CD4-positive, alpha-beta memory T cell (primary cell): ENCODE measurements at regions of chr17 and their contacts with region 1.

Region 1: DNA sequence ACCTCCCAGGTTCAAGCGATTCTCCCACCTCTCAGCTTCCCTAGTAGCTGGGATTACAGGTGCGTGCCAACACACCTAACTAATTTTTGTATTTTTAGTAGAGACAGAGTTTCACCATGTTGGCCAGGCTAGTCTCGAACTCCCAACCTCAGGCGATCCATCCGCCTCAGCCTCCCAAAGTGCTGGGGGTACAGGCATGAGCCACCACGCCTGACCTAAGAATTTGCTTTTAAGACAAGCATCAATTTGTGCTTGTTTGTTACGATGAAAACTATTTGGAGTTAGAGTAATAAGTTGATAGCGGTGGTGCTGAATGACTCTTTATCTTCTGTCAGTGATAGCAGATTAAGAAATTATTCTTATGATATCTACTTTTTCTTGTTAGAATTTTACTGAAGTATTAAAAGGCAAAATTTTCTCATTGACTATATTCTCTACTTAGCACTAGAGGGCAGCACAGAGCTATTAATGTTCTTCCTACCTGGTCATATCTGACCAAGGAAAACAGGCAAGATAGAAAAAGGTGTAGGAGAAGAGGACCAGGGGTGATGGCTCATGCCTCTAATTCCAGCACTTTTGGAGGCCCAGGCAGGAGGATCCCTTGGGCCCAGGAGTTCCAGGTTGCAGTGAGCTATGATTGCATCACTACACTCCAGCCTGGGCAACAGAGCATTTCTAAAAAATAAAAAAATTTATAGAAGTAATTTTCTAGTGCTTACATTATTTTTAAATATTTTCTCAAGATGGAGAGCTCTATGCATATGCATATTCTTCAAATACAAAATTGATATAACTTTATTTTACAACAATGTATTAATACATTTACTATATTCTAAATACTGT is 24.5 kb downstream of the STXBP4 start:
- DNase-seq: peak in 4 of 5 donors; percentile 49 to 59 (median 56)
- H3K4me3 ChIP-seq: no peak overlapping the region
- H3K4me3 Mint-ChIP-seq: no peak overlapping the region
- H3K27ac ChIP-seq: no peak overlapping the region
- H3K27ac Mint-ChIP-seq: no peak overlapping the region
- H3K4me1 ChIP-seq: no peaks in the 10 kb centered on the region
- H3K4me1 Mint-ChIP-seq: no peaks in the 10 kb centered on the region
- H3K27me3 ChIP-seq: no peaks in the 10 kb centered on the region
- H3K27me3 Mint-ChIP-seq: no peaks in the 10 kb centered on the region

Region 2: GRCh38 chr17:54900457-54901229 is 92.4 kb before region 1 on chr17 and contains the start of gene TOM1L1:
- CTCF ChIA-PET with region 1: no interaction called
- POLR2A ChIA-PET with region 1: no interaction called
- intact Hi-C with region 1: no loop called
- DNase-seq: peak in 4 of 5 donors; percentile 9 to 24 (median 15)
- H3K4me3 ChIP-seq: peak within 1 kb of the TSS in 1 of 2 donors; percentile 2
- H3K4me3 Mint-ChIP-seq: peak within 1 kb of the TSS; percentile 49 to 71 (median 56)
- H3K27ac ChIP-seq: no peak within 1 kb of the TSS
- H3K27ac Mint-ChIP-seq: peak within 1 kb of the TSS in 1 of 7 donors; percentile 36
- H3K4me1 ChIP-seq: peaks cover 7% of the 10 kb centered on the region
- H3K4me1 Mint-ChIP-seq: peaks cover 9 to 17% (median 12%) of the 10 kb centered on the region in 4 donors
- H3K27me3 ChIP-seq: no peaks in the 10 kb centered on the region
- H3K27me3 Mint-ChIP-seq: peaks cover 22 to 25% of the 10 kb centered on the region in 2 donors
- total RNA-seq, gene TOM1L1: 0.53 TPM in 1 of 2 experiments, not detected in the other

Region 3: GRCh38 chr17:55005520-55005919 is 12.5 kb after region 1 on chr17:
- CTCF ChIA-PET with region 1: interaction called, 35 read pairs
- POLR2A ChIA-PET with region 1: no interaction called
- intact Hi-C with region 1: no loop called
- DNase-seq: peak in 2 of 5 donors; percentile 1 to 5
- H3K4me3 ChIP-seq: no peak overlapping the region
- H3K4me3 Mint-ChIP-seq: no peak overlapping the region
- H3K27ac ChIP-seq: no peak overlapping the region
- H3K27ac Mint-ChIP-seq: no peak overlapping the region
- H3K4me1 ChIP-seq: no peaks in the 10 kb centered on the region
- H3K4me1 Mint-ChIP-seq: no peaks in the 10 kb centered on the region
- H3K27me3 ChIP-seq: no peaks in the 10 kb centered on the region
- H3K27me3 Mint-ChIP-seq: no peaks in the 10 kb centered on the region

Region 4: DNA sequence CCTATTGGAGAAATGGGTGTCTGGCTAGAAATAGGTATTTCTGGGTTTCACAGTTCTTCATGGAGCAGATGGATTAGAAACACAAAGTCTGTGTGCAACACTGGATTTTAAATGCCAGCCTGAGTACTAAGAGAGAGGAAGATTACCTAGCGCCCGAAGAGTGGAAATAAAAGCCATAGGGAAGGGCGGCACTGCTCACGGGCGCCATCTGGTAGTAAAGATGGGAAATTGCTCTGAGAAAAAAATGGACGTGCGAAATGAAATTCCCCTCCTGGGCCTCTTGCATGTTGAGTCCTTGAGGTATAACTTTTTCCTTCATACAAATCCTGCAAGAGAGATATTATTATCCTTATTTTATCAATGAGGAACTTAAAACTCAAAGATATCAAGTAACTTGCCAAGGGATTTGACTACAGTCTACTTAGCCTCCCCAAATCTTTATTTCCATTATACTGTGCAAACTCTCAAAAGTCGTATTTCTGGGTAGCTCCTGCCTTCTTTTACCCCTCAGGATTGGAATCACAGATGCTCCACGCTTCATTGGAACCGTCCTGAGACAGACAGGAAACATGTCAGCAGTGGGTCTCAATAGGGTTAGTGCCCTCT is 355.8 kb after region 1 on chr17:
- CTCF ChIA-PET with region 1: interaction called, 173 read pairs
- POLR2A ChIA-PET with region 1: no interaction called
- intact Hi-C with region 1: loop called (anchors 1 kb)
- DNase-seq: peak in 4 of 5 donors; percentile 41 to 48 (median 48)
- H3K4me3 ChIP-seq: no peak overlapping the region
- H3K4me3 Mint-ChIP-seq: peak overlapping the region in 7 of 8 donors; percentile 5 to 76 (median 57)
- H3K27ac ChIP-seq: no peak overlapping the region
- H3K27ac Mint-ChIP-seq: peak overlapping the region in 3 of 7 donors; percentile 5 to 54 (median 51)
- H3K4me1 ChIP-seq: peaks cover 35% of the 10 kb centered on the region
- H3K4me1 Mint-ChIP-seq: peaks cover 30 to 46% (median 30%) of the 10 kb centered on the region in 4 donors
- H3K27me3 ChIP-seq: no peaks in the 10 kb centered on the region
- H3K27me3 Mint-ChIP-seq: no peaks in the 10 kb centered on the region

Region 5: GRCh38 chr17:55366020-55366481 is 373.0 kb after region 1 on chr17:
- CTCF ChIA-PET with region 1: interaction called, 20 read pairs
- POLR2A ChIA-PET with region 1: no interaction called
- intact Hi-C with region 1: no loop called
- DNase-seq: no peak
- H3K4me3 ChIP-seq: no peak overlapping the region
- H3K4me3 Mint-ChIP-seq: no peak overlapping the region
- H3K27ac ChIP-seq: no peak overlapping the region
- H3K27ac Mint-ChIP-seq: no peak overlapping the region
- H3K4me1 ChIP-seq: no peaks in the 10 kb centered on the region
- H3K4me1 Mint-ChIP-seq: peaks cover 0 to 2% (median 0%) of the 10 kb centered on the region in 4 donors
- H3K27me3 ChIP-seq: peaks cover 3% of the 10 kb centered on the region
- H3K27me3 Mint-ChIP-seq: peaks cover 2 to 5% of the 10 kb centered on the region in 2 donors